Pancreas (tissue), 10 donors: ENCODE measurements at regions of chr10 and their contacts with region 1.

Region 1: DNA sequence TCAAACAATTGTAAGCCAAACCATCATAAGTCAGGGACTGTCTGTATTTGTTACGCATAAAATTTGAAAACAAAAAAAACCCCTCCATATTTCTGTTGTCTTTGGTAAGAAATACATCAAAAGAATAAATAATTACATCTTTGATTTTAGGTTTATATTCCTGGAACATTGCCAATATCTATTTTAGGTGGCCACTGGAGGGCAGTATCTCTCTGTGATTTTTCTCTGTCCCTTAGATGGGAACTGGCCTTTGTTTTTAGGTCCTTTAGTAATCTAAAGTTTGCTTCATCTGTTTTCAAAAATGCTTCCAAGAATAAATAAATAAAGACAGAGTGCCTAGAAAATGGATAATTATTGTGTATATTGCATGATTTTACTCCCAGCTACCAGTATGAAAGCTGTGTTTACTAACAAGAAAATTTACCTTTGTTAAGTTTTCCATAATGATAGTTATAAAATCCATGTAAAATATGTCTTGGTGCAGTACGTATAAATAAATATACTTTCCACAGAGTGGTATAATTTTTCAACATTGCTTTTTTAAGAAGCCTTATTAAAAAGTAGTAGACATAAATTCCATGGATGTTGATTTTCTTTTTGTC is 64.2 kb downstream of the PHYHIPL start:
- DNase-seq: peak in 1 of 6 donors; percentile 20
- ATAC-seq: peak in 3 of 4 donors; percentile 60 to 62 (median 61)
- H3K4me3 ChIP-seq: no peak overlapping the region
- H3K27ac ChIP-seq: no peak overlapping the region
- H3K4me1 ChIP-seq: no peaks in the 10 kb centered on the region
- H3K27me3 ChIP-seq: no peaks in the 10 kb centered on the region
- CTCF ChIP-seq: peak; percentile 27 to 57 (median 38)

Region 2: DNA sequence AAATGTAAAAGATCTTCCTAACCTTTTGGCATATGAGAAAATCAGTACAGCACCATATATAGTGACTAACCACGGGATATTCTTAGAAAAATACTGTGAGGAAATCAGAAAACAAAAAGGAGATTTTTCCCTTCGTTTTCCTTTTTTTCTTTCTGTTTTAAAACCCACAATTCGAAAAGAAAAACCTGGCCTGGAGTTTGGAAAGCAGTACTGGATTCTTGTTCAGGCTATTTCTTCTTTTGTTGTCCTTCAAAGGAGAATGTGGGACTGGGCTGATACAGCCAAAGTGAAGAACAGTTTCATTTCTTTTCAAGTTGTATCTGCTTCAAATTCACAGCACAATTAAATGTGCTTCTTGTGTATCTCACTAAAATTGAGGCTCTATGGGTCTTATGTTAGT is 221.1 kb before region 1 on chr10:
- intact Hi-C with region 1: no loop called
- DNase-seq: no peak
- ATAC-seq: peak in 3 of 4 donors; percentile 53 to 65 (median 56)
- H3K4me3 ChIP-seq: no peak overlapping the region
- H3K27ac ChIP-seq: no peak overlapping the region
- H3K4me1 ChIP-seq: peaks cover 0 to 8% (median 7%) of the 10 kb centered on the region in 3 donors
- H3K27me3 ChIP-seq: no peaks in the 10 kb centered on the region
- CTCF ChIP-seq: no peak

Region 3: GRCh38 chr10:59577984-59578383 is 337.3 kb after region 1 on chr10:
- intact Hi-C with region 1: loop called in 2 of 3 experiments (anchors 5 to 10 kb)
- DNase-seq: no peak
- ATAC-seq: no peak
- H3K4me3 ChIP-seq: no peak overlapping the region
- H3K27ac ChIP-seq: no peak overlapping the region
- H3K4me1 ChIP-seq: no peaks in the 10 kb centered on the region
- H3K27me3 ChIP-seq: no peaks in the 10 kb centered on the region
- CTCF ChIP-seq: no peak